ENCODE measurements at regions of chr6 and their contacts with region 1.

Region 1: GRCh38 chr6:84428300-84428907 is 201.0 kb upstream of the CEP162 start:
- DNase-seq: peak in 1 of 2 donors; percentile 50
- ATAC-seq: peak; percentile 46

Region 2: GRCh38 chr6:84508981-84509380 is 80.6 kb after region 1 on chr6:
- intact Hi-C with region 1: no loop called
- DNase-seq: no peak
- ATAC-seq: no peak

Region 3: DNA sequence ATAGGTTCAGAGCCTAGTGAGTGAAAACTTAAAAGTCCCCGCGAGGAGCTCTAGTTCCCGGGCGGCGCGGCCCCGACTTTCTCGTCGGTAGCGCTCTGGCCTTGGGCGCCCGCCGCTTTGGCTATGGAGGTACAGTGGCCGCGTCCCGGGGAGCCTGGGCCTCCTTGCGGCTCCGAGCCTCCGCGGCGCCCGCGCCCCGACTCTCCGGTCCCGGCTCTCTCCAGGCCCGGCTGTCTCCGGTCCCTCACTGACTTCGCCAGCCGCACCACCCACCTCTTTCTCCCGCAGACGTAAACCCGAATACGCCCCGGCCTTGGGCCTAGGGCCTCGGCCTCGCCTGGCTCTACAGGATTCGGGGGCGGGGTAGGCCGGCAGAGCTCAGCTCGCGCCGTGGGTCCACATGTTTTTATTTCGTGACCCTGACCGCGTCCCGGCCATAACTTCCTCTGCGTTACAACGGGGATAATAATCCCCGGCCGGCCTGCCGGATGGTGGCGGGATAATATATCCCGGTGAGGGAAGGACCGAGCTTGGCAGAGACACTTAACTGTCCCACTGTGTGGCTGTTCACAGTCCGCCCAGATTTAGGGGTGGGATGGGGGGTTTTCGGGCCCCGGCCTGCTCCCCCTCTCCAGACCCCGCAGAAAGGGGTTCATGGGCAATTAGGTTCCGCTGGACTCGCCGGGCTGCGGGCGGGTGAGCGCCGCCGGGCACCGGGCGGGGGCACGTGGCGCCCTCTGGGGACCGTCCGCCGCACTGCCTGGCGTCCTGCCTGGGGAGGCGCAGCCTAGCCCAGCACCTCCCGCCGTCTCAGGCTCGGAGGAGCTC is 346.0 kb after region 1 on chr6:
- intact Hi-C with region 1: loop called in 1 of 2 experiments (anchors 10 kb)
- DNase-seq: peak in 1 of 2 donors; percentile 40
- ATAC-seq: peak; percentile 90